Activated T-helper 2 cell treated with anti-CD3 and anti-CD28 coated beads, Interferon-gamma antibody, Interleukin-2, Interleukin-4, amounts not matched to agents 10 μg/mL and 5 μg/mL and 100 μg/mL, durations not matched to agents 14 hours and 24 hours and 36 hours (primary cell): ENCODE measurements at regions of chr10 and their contacts with region 1.

Region 1: DNA sequence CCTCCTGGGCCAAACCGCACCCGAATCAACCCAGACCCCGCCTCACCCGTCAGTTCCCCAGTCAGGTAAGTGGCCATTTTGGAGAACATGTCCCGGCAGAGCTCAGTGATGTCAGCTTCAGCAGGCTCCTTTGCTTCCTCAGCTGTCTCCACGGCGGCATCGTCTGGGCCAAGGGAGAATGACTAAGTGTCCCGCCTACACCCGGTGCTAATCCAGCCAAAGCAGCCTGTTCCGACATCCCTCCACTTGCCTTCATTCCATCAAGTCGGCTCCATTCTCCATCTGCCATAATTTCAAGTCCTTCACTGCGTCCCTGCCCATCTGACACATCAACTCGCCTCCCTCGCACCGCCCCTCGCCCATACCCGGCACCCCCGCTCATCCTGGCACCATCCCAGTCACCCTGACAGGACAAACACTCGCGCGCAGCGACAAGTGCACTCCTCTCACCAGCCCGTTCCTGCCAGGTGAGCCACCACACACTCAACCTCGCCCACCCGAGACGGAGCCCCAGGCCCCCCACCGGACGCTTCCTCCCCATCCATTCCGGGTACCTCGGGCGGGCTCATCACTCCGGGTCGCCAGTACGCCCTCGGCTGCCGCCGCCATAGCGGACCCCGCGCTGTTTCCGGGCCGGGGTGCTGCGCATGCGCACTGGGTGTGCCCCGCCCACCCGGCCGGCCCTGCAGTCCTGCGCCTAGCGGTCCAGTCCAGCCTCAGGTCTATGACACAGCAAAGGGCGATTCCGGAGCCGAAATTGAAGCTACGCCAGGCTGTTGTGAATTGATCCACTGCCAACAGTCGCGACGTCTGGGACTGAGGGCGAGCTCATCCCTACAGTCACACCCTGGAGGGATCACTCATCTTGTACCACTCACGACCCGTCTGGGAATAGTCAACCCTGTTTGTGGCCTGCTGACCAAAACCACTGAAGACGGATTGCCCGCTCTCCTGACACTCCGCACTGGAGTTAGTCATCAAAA is at the start of gene BLOC1S2:
- DNase-seq: peak; percentile 88
- H3K4me3 Mint-ChIP-seq: peak within 1 kb of the TSS; percentile 99
- H3K27ac Mint-ChIP-seq: peak within 1 kb of the TSS; percentile 99
- H3K4me1 Mint-ChIP-seq: peaks cover 19% of the 10 kb centered on the region
- H3K27me3 Mint-ChIP-seq: no peaks in the 10 kb centered on the region
- total RNA-seq, gene BLOC1S2: 49.1 and 56.3 TPM in 2 replicates

Region 2: GRCh38 chr10:100229819-100230422 is 56.4 kb before region 1 on chr10:
- intact Hi-C with region 1: loop called (anchors 2 kb)
- DNase-seq: no peak
- H3K4me3 Mint-ChIP-seq: peak overlapping the region; percentile 91
- H3K27ac Mint-ChIP-seq: peak overlapping the region; percentile 84
- H3K4me1 Mint-ChIP-seq: peaks cover 23% of the 10 kb centered on the region
- H3K27me3 Mint-ChIP-seq: no peaks in the 10 kb centered on the region

Region 3: DNA sequence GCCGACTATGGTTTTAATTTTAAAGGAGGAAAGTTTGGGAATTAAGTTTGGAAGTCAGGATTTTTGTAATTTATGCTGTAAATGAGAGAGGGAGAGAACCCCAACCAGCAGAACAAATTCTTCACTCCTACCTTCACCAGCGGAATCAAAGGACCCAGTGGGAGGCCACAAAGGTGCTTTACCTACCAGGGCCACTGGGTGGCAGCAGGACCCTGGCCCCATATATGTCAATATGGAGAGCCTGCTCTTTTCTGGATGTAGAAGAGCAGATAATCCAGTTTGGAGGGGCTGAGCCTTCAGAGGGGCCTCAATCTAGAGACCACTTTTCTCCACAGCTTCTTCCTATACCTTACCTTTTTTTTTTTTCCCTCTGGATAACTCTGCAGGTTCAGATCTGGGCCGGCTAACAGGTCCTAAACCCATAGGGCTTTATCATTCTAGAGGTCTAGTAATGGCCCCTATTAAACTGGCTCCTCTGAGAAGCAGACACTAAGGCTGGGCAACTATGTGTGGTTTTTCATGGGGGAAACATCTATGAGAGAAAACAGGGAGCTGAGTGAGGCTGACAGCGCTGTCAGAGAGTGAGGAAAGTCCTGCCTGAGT is 52.2 kb after region 1 on chr10:
- intact Hi-C with region 1: loop called (anchors 5 kb)
- DNase-seq: peak; percentile 71
- H3K4me3 Mint-ChIP-seq: no peak overlapping the region
- H3K27ac Mint-ChIP-seq: no peak overlapping the region
- H3K4me1 Mint-ChIP-seq: peaks cover 17% of the 10 kb centered on the region
- H3K27me3 Mint-ChIP-seq: peaks cover 9% of the 10 kb centered on the region

Region 4: DNA sequence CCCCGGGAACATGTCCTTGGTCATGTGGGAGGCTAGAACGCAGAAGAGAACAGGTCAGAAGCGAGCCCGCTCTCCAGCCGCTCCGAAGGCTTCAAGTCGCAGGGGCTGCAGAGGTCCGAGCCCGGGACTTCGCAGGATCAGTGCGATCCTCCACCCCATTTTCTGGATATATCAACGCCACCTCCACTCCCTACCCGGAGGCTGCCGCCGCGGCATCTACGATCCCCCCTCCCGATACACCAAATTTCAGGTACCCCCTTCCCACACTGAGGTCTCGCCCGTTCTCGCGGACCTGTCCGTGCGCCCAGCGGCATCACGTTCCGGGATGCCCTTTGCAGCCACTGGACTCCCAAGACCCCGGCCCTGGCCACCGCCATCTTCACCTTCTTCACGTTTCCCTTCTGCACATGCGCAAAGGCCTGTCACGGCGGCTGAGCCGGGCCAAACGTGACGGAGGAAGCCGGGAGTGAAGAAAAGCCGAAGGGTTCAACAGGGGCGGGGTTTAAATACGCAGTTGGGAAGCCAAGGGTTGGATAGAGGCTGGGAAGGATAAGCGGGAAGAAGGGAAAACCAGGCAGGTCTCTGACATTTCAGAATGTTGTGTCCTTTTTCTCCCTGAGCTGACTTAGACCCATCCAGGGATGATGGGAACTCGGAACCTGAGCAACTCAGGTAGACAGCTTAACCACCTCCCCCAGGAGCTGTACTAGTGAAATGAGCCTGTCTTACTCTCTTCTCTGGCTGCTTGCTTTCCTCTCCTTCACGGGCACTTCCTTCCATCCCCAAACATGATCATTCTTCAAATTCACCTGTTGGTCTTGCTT is 243.3 kb after region 1 on chr10 and contains the start of gene NDUFB8:
- intact Hi-C with region 1: loop called (anchors 5 kb)
- DNase-seq: peak; percentile 83
- H3K4me3 Mint-ChIP-seq: peak within 1 kb of the TSS; percentile 89
- H3K27ac Mint-ChIP-seq: peak within 1 kb of the TSS; percentile 95
- H3K4me1 Mint-ChIP-seq: peaks cover 22% of the 10 kb centered on the region
- H3K27me3 Mint-ChIP-seq: no peaks in the 10 kb centered on the region
- total RNA-seq, gene NDUFB8: 278 and 283 TPM in 2 replicates